ENCODE measurements at regions of chr2 and their contacts with region 1.

Region 1: DNA sequence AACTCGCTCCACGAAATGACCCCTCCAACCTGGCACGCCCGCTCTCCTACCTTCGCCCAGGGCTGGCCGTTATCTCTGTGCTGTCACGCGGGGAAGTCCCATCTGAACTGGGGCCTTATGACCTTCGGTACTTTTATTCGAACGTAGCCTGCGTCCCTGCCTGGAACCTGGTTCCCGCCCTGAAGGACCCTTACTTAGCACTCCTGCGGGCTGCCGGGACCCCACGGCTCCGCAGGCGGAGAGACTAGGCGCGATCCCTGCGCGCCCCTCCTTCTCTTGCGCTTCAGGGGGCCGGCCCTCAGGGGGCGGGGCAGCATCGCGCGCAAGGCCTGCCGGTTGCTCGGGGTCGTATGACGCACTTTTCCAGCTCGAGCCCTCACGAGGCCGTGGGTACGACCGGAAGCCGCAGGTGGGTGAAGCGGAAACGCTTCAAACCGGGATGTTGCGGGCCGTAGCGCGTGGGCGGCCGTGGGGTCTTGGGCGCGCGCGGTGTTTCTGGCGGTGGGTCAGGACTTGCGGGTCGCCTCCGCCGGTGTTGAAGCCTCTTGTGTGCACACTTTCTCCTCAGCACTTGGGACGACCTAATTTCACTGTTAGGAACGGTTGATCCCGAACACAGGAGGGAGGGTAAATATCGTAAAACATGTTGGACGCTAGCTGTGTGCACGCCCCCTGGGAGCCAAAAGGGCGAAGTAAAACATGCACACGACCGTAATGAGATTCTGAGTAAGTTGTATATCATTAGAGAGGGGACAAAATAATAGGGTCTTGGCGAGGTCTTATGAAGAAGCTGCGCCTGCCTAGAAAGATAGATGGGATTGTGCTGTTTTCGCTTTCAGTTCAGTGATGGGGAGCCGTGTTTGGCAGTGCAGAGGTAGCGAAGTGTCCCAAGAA is at the starts of genes LIPT1 and TSGA10:
- DNase-seq: peak; percentile 54 to 92
- H3K4me3 ChIP-seq: peak within 1 kb of the TSS; percentile 55 to 95 (median 82)
- H3K27ac ChIP-seq: peak within 1 kb of the TSS; percentile 79; the same call in 1 of the 2 replicates
- H3K4me1 ChIP-seq: peaks cover 0 to 8% (median 3%) of the 10 kb centered on the region in 4 experiments; a peak in 2 of 7 replicates
- H3K27me3 ChIP-seq: no peaks in the 10 kb centered on the region
- CTCF ChIP-seq: peak in 1 of 3 experiments; percentile 4; a peak in 1 of 4 replicates
- EP300 ChIP-seq: no peak
- POLR2A ChIP-seq: peak; percentile 50 to 90
- RAD21 ChIP-seq: no peak
- total RNA-seq, gene LIPT1: 8.8 and 10.9 TPM in 2 replicates
- total RNA-seq, gene TSGA10: 5.7 and 7.4 TPM in 2 replicates

Region 2: DNA sequence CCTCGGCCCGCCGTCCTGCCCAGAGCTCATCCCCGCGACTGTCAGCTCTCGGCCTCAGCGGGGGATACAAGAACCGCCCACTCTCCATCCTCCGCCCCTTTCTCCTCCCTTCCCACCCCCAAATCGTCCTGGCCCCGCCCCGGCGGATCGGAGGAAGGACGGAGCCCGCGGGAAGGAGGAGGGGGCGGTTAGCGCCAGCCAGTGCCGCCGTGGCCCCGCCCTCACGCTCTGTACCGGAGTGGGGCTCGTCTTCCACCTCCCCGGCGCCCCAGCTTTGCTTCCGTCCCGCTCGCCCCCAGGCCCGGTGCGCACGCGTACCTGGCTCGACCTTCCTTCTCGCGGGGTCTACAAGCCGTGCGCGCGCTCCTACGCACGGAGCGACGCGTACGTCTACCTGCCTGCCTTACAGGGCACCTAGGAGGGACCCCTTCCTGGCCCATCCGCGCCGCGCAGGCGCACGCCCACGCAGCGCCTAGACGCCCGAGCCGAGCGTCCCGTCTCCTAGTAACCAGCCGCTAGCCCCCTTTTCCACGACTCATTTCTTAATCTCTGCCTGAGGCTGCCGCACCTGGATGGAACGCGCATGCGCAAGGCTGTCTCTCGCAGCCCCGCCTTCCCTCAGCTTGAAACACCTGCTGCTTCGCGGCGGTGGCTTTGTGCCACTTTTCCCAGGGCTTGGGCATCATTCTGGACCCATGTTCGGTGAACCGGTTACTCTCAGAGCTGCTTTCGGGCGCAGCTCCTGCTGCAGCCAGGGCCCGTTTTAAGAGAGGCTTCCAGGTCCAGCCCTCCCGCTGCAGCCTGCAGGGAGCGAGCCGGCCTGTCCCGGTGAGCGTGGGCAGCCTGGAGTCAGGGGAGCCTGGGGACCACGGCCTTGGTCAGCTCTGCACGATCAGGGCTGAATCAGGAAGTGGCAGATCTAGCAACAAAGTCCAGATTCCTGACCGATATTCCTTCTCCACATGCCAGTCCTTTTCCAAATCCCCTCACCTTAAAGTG is 13.5 kb before region 1 on chr2 and contains the start of gene C2orf15:
- CTCF ChIA-PET with region 1: interaction called, 4 read pairs
- POLR2A ChIA-PET with region 1: interaction called, 45 read pairs
- DNase-seq: peak; percentile 86 to 96
- H3K4me3 ChIP-seq: peak within 1 kb of the TSS; percentile 65 to 83 (median 82)
- H3K27ac ChIP-seq: peak within 1 kb of the TSS; percentile 72
- H3K4me1 ChIP-seq: no peaks in the 10 kb centered on the region; a peak in 3 of 7 replicates
- H3K27me3 ChIP-seq: no peaks in the 10 kb centered on the region
- CTCF ChIP-seq: no peak
- EP300 ChIP-seq: no peak
- POLR2A ChIP-seq: peak; percentile 63 to 67; a peak in 2 of 3 replicates
- RAD21 ChIP-seq: no peak
- total RNA-seq, gene C2orf15: 5.5 and 6.5 TPM in 2 replicates

Region 3: DNA sequence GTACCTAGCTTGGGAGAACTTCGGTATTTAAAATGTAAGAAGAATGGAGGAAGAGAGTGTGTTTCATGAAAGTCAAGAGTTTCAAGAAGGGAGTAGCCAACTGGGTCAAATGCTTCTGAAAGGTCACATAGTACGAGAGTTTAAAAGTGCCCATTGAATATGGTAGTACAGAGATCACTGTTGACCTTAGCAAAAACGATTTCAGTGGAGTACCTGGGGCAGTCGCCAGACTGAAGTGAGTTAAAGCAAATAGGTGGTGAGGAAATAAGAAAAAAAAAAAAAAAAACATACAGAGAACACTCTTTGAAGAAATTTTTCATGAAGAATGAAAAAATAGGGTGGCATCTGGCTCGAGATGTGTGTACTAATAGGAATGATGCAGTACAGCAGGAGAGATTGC is 11.3 kb after region 1 on chr2:
- CTCF ChIA-PET with region 1: interaction called, 11 read pairs
- POLR2A ChIA-PET with region 1: no interaction called
- DNase-seq: no peak
- H3K4me3 ChIP-seq: no peak overlapping the region
- H3K27ac ChIP-seq: no peak overlapping the region
- H3K4me1 ChIP-seq: no peaks in the 10 kb centered on the region
- H3K27me3 ChIP-seq: no peaks in the 10 kb centered on the region
- CTCF ChIP-seq: no peak
- EP300 ChIP-seq: no peak
- POLR2A ChIP-seq: no peak
- RAD21 ChIP-seq: no peak

Region 4: DNA sequence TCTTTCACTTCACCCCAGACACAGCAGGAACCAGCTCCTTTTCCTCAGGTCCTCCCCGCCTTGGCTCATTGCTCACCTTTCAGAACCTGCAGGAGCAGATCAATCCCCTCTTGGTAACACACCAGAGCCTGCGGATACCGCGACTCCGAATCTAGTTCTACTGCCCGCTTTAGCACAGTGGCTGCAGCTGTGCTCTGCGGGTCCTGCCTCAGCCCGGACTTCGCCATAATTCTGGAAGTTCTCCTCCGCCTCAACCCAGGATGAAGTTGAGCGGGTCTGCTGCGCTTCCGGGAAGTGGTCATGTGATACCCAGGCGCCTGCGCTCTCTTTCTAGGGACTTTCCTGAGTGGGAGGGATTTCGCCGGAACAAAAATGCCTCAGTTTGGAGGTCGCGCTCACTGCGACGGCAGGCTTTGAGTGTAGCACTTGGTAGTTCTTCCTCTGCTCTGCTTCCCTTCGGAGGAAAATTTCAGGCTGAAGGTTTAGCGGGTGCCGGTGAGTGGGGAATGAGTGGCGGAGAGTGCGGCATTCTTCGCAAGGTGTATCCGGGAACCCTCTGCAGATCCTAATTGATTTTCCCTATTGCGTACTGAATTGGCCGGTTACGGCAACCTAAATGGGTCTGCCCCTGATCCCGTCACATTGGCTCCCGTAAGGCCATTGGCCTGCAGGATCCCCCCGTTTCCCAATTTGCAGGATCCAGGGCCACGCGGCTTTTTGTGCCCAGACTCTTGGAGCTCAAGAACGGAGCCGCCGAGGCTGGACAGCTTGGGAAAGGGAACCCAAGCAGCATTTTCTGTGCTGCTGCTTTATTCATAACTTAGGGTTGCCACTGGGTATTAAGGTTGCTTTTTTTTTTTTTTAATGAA is 26.1 kb after region 1 on chr2 and contains the starts of genes MITD1 and MRPL30:
- CTCF ChIA-PET with region 1: interaction called, 5 read pairs
- POLR2A ChIA-PET with region 1: interaction called, 14 read pairs
- DNase-seq: peak; percentile 76 to 86
- H3K4me3 ChIP-seq: peak within 1 kb of the TSS; percentile 81 to 95 (median 89)
- H3K27ac ChIP-seq: peak within 1 kb of the TSS; percentile 81
- H3K4me1 ChIP-seq: peaks cover 0 to 2% (median 0%) of the 10 kb centered on the region in 4 experiments; a peak in 3 of 7 replicates
- H3K27me3 ChIP-seq: no peaks in the 10 kb centered on the region
- CTCF ChIP-seq: no peak
- EP300 ChIP-seq: peak in 1 of 2 experiments; percentile 80; a peak in 1 of 3 replicates
- POLR2A ChIP-seq: peak; percentile 86 to 99
- RAD21 ChIP-seq: no peak
- total RNA-seq, gene MITD1: 31.7 and 36.2 TPM in 2 replicates
- total RNA-seq, gene MRPL30: 43.4 and 46.2 TPM in 2 replicates

Measured in H1 (cell line).